Motor neuron (in vitro differentiated cells): ENCODE measurements at regions of chr16 and their contacts with region 1.

Region 1: GRCh38 chr16:83826146-83826913 is 18.6 kb downstream of the HSBP1 start:
- ATAC-seq: peak; percentile 82 to 99 (median 94)
- H3K4me3 ChIP-seq: no peak overlapping the region
- H3K27ac ChIP-seq: no peak overlapping the region
- H3K4me1 ChIP-seq: peaks cover 0 to 7% of the 10 kb centered on the region in 2 donors

Region 2: DNA sequence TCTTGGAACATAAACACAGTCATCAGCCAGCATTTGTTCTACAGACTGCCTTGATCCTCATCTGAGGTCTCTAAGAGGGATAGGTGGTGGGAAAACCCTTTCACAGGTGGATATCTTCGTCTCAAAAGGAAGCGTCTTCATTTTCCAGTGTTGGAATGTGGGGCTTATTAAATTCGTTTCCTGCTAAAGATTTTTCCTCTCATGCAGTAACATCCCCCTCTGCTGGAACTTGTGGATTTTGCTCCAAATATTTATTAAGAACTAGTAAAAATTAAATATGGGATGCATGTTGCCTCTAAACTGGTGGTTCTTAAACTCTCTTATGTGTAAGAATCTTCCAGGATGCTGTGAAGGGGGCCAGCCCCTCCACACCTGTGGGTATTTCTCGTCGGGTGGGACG is 52.5 kb after region 1 on chr16:
- in situ Hi-C with region 1: loop called in 1 of 9 experiments (anchors 10 kb)
- ATAC-seq: peak in 1 of 8 experiments; percentile 52
- H3K4me3 ChIP-seq: no peak overlapping the region
- H3K27ac ChIP-seq: no peak overlapping the region
- H3K4me1 ChIP-seq: peaks cover 0 to 5% of the 10 kb centered on the region in 2 donors